Dorsolateral prefrontal cortex (tissue), 120 donors: ENCODE measurements at regions of chr10 and their contacts with region 1.

Region 1: GRCh38 chr10:1551636-1552338 is 185.5 kb downstream of the ADARB2 start:
- DNase-seq: peak in 5 of 10 donors; percentile 23 to 42 (median 34)
- H3K4me3 ChIP-seq: no peak overlapping the region
- H3K27ac ChIP-seq: peak overlapping the region in 7 of 59 donors; percentile 12 to 61 (median 42)
- H3K27me3 ChIP-seq: peaks cover 0 to 6% (median 0%) of the 10 kb centered on the region in 45 donors
- CTCF ChIP-seq: no peak

Region 2: DNA sequence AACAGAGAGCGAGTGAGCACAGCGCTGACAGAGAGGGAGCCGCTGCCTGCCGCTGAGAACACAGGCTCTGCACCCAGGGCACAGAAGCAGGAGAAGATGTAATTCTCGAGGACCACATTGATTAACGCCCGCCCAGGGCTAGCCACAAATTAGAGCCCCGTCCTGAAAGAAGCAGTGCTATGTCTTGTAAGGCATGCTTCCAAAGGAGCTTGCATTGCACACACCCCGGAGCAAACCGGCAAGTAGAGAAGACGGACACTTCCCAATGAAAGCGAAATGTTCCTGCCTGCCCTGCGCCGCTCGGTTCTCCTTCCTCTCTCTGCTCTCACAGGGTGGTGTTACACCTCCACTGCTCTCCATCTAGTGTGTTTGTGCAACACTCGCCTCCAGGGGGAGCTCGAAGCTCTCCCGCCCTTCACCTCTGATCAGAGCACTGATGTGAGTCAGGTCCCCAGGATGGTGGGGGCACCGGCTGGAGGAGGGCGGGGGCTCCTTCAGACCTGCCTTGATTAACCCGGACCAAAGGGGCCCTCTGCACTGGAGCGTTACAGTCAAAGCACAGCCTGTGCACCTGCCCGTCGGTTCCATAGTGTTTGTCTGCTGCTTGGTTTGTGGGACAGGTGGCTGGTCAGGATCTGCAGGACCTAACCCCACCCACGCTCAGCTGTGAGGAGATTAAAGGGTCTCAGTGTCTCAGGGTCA is 131.0 kb before region 1 on chr10:
- intact Hi-C with region 1: loop called in 1 of 2 experiments (anchors 10 kb)
- DNase-seq: peak; percentile 12 to 86 (median 78)
- H3K4me3 ChIP-seq: peak overlapping the region; percentile 10 to 66 (median 47)
- H3K27ac ChIP-seq: peak overlapping the region in 8 of 59 donors; percentile 12 to 75 (median 30)
- H3K27me3 ChIP-seq: peaks cover 0 to 9% (median 0%) of the 10 kb centered on the region in 45 donors
- CTCF ChIP-seq: peak in 55 of 56 donors; percentile 33 to 86 (median 69)

Region 3: GRCh38 chr10:2122431-2123124 is 570.8 kb after region 1 on chr10:
- intact Hi-C with region 1: no loop called
- DNase-seq: peak in 1 of 10 donors; percentile 8
- H3K4me3 ChIP-seq: no peak overlapping the region
- H3K27ac ChIP-seq: peak overlapping the region in 1 of 59 donors; percentile 13
- H3K27me3 ChIP-seq: peaks cover 0 to 5% (median 0%) of the 10 kb centered on the region in 45 donors
- CTCF ChIP-seq: no peak